CD4-positive, alpha-beta T cell (primary cell): ENCODE measurements at regions of chr7 and their contacts with region 1.

Region 1: DNA sequence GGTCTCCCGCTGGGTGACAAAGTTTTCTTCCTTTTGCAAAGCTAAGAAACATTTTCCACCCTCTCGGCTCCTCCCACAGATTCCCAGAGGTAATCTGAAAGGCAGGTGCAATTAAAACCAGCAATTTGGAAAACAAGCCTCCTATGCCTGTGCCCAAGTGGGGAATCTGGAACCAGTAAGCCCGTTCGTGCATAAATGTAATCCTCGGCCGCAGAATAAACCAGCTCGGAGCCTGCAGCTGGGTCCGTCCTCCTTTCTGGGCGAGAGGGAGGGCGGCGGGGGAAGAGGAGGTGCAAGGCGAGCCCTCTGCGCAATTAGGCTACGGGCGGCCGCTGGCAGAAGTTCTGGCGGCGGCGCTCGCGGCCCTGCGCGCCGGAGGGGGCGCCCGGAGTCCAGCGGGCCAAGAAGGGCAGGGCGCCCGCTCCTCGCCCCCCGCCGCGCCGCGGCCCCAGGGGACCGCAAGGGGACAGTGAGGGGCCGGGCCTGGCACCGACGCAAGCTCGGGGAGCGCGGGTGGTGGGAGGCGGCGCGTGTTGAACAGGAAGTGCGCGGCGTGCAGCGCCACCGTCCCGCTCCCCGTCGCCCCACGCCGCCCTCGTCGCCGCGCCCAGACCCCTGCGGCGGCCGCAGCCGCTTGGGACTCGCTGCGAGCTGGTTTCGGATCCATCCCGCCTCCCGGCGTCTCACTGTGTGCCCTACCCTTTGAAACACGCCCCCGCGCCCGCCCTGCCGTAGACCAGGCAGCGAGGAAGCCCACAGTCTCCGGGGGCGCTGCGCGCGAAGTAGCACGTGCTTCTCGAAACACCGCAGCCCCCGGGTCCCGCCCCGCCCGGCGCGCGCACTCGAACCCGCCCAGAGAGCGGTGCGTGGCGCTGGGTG is at the start of gene PRKAG2:
- DNase-seq: peak; percentile 53 to 84 (median 70)
- ATAC-seq: peak; percentile 54
- H3K4me3 ChIP-seq: peak within 1 kb of the TSS; percentile 91
- H3K4me3 Mint-ChIP-seq: peak within 1 kb of the TSS; percentile 99
- H3K27ac ChIP-seq: peak within 1 kb of the TSS; percentile 45 to 64
- H3K27ac Mint-ChIP-seq: peak within 1 kb of the TSS; percentile 93
- H3K4me1 ChIP-seq: peaks cover 24% of the 10 kb centered on the region
- H3K4me1 Mint-ChIP-seq: peaks cover 30% of the 10 kb centered on the region
- H3K27me3 ChIP-seq: no peaks in the 10 kb centered on the region
- H3K27me3 Mint-ChIP-seq: no peaks in the 10 kb centered on the region
- CTCF ChIP-seq: peak; percentile 21
- total RNA-seq, gene PRKAG2: 39.3 to 42.3 TPM

Region 2: GRCh38 chr7:151519765-151520418 is 357.2 kb before region 1 on chr7 and contains the start of gene RHEB:
- CTCF ChIA-PET with region 1: no interaction called
- POLR2A ChIA-PET with region 1: interaction called, 13 read pairs
- intact Hi-C with region 1: loop called in 1 of 2 experiments (anchors 5 kb)
- DNase-seq: peak; percentile 97 to 99 (median 98)
- ATAC-seq: peak; percentile 85
- H3K4me3 ChIP-seq: peak within 1 kb of the TSS; percentile 62
- H3K4me3 Mint-ChIP-seq: peak within 1 kb of the TSS; percentile 99
- H3K27ac ChIP-seq: peak within 1 kb of the TSS; percentile 79
- H3K27ac Mint-ChIP-seq: peak within 1 kb of the TSS; percentile 98
- H3K4me1 ChIP-seq: peaks cover 37% of the 10 kb centered on the region
- H3K4me1 Mint-ChIP-seq: peaks cover 44% of the 10 kb centered on the region
- H3K27me3 ChIP-seq: no peaks in the 10 kb centered on the region
- H3K27me3 Mint-ChIP-seq: no peaks in the 10 kb centered on the region
- CTCF ChIP-seq: no peak
- total RNA-seq, gene RHEB: 40.3 to 42.6 TPM

Region 3: GRCh38 chr7:151570366-151570915 is 306.7 kb before region 1 on chr7:
- CTCF ChIA-PET with region 1: no interaction called
- POLR2A ChIA-PET with region 1: no interaction called
- intact Hi-C with region 1: no loop called
- DNase-seq: peak in 2 of 14 experiments; percentile 24 to 32
- ATAC-seq: no peak
- H3K4me3 ChIP-seq: no peak overlapping the region
- H3K4me3 Mint-ChIP-seq: no peak overlapping the region
- H3K27ac ChIP-seq: no peak overlapping the region
- H3K27ac Mint-ChIP-seq: no peak overlapping the region
- H3K4me1 ChIP-seq: no peaks in the 10 kb centered on the region
- H3K4me1 Mint-ChIP-seq: no peaks in the 10 kb centered on the region
- H3K27me3 ChIP-seq: no peaks in the 10 kb centered on the region
- H3K27me3 Mint-ChIP-seq: no peaks in the 10 kb centered on the region
- CTCF ChIP-seq: peak; percentile 49

Region 4: DNA sequence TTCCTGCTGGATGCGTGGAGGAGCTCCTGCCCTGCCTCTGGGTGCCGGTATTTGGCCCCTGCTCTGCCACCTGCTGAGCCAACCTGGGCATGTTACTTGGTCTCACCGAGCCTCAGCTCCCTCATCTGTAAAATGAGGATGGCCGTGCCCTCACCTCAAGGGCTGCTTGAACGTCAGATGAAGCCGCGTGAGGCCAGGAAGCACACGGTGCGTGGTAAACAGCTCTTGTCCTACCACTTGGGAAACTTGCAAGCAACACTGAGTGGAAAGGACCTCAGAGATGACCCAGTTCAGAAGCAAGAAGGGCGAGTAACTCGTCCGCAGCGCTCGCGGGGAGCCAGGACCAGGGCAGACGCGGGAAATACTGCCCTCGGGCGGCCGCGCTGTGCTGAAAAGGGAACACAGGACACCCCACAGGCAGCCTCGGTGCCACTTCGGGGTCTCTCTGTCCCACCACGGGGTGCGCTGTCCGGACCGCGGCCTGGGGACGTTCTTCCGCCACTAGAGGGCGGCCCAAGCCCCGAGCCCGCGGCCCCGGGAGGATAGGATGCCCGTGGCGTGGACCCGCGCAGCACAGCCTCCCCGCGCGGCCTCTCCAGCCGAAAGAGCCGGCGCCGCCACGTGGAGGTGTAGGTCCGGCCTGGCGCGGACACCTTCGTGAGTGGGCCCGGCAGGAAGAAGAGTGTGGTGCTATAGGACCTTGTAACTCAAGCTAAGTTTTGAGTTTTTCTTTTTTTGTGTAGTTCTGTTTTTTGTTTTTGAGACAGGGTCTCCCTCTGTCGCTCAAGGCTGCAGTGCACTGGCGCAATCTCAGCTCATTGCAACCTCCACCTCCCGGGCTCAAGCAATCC is 94.3 kb before region 1 on chr7:
- CTCF ChIA-PET with region 1: interaction called, 3 read pairs
- POLR2A ChIA-PET with region 1: interaction called, 7 read pairs
- intact Hi-C with region 1: loop called in 1 of 2 experiments (anchors 5 kb)
- DNase-seq: peak; percentile 41 to 83 (median 58)
- ATAC-seq: peak; percentile 82
- H3K4me3 ChIP-seq: peak overlapping the region; percentile 38
- H3K4me3 Mint-ChIP-seq: peak overlapping the region; percentile 87
- H3K27ac ChIP-seq: no peak overlapping the region
- H3K27ac Mint-ChIP-seq: peak overlapping the region; percentile 76
- H3K4me1 ChIP-seq: peaks cover 11% of the 10 kb centered on the region
- H3K4me1 Mint-ChIP-seq: peaks cover 10% of the 10 kb centered on the region
- H3K27me3 ChIP-seq: no peaks in the 10 kb centered on the region
- H3K27me3 Mint-ChIP-seq: no peaks in the 10 kb centered on the region
- CTCF ChIP-seq: peak; percentile 96

Region 5: GRCh38 chr7:151936207-151936606 is 59.1 kb after region 1 on chr7:
- CTCF ChIA-PET with region 1: no interaction called
- POLR2A ChIA-PET with region 1: interaction called, 12 read pairs
- intact Hi-C with region 1: loop called (anchors 2 to 5 kb)
- DNase-seq: peak in 3 of 14 experiments; percentile 76 to 84 (median 77)
- ATAC-seq: peak; percentile 88
- H3K4me3 ChIP-seq: peak overlapping the region; percentile 38
- H3K4me3 Mint-ChIP-seq: peak overlapping the region; percentile 87
- H3K27ac ChIP-seq: peak overlapping the region; percentile 49 to 80
- H3K27ac Mint-ChIP-seq: peak overlapping the region; percentile 89
- H3K4me1 ChIP-seq: peaks cover 18% of the 10 kb centered on the region
- H3K4me1 Mint-ChIP-seq: peaks cover 25% of the 10 kb centered on the region
- H3K27me3 ChIP-seq: no peaks in the 10 kb centered on the region
- H3K27me3 Mint-ChIP-seq: no peaks in the 10 kb centered on the region
- CTCF ChIP-seq: no peak

Region 6: GRCh38 chr7:152145853-152146466 is 268.8 kb after region 1 on chr7:
- CTCF ChIA-PET with region 1: no interaction called
- POLR2A ChIA-PET with region 1: interaction called, 29 read pairs
- intact Hi-C with region 1: loop called in 1 of 2 experiments (anchors 5 kb)
- DNase-seq: peak in 11 of 14 experiments; percentile 17 to 69 (median 30)
- ATAC-seq: no peak
- H3K4me3 ChIP-seq: no peak overlapping the region
- H3K4me3 Mint-ChIP-seq: peak overlapping the region; percentile 50
- H3K27ac ChIP-seq: peak overlapping the region; percentile 26 to 77
- H3K27ac Mint-ChIP-seq: peak overlapping the region; percentile 96
- H3K4me1 ChIP-seq: peaks cover 43% of the 10 kb centered on the region
- H3K4me1 Mint-ChIP-seq: peaks cover 48% of the 10 kb centered on the region
- H3K27me3 ChIP-seq: no peaks in the 10 kb centered on the region
- H3K27me3 Mint-ChIP-seq: no peaks in the 10 kb centered on the region
- CTCF ChIP-seq: peak; percentile 66

Region 7: DNA sequence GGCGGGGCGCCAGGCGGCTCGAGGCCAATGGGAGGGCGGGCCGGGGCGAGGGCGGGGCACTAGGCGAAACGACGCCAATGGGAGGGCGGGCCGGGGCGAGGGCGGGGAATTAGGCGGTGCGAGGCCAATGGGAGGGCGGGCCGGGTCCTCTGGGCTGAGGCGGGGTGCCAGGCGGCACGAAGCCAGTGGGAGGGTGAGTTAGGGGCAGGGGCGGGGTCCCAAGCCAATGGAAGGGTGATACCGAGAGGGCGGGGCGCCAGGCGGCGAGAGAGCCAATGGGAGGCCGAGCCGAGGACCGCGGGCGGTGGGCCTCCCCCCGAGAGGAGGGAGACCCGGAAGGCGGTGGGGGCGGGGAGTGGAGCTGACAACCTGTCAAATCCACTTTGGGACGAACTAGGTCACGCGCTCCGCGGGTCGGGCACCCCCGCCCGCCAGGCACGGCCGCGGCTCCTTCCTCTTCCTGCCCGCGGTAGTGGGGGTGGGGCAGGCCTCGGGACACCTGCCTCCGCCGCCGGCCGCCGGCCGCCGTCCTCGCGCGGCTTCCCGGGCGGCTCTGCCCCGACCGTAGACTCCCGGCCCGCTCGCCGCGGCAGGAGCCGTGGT is 586.7 kb after region 1 on chr7:
- CTCF ChIA-PET with region 1: no interaction called
- POLR2A ChIA-PET with region 1: no interaction called
- intact Hi-C with region 1: loop called in 1 of 2 experiments (anchors 10 kb)
- DNase-seq: peak; percentile 99 to 100 (median 100)
- ATAC-seq: peak; percentile 91
- H3K4me3 ChIP-seq: peak overlapping the region; percentile 93
- H3K4me3 Mint-ChIP-seq: peak overlapping the region; percentile 93
- H3K27ac ChIP-seq: peak overlapping the region; percentile 76 to 93
- H3K27ac Mint-ChIP-seq: peak overlapping the region; percentile 74
- H3K4me1 ChIP-seq: peaks cover 10% of the 10 kb centered on the region
- H3K4me1 Mint-ChIP-seq: peaks cover 6% of the 10 kb centered on the region
- H3K27me3 ChIP-seq: no peaks in the 10 kb centered on the region
- H3K27me3 Mint-ChIP-seq: no peaks in the 10 kb centered on the region
- CTCF ChIP-seq: no peak